Vagina (tissue), 2 donors: ENCODE measurements at regions of chr2 and their contacts with region 1.

Region 1: DNA sequence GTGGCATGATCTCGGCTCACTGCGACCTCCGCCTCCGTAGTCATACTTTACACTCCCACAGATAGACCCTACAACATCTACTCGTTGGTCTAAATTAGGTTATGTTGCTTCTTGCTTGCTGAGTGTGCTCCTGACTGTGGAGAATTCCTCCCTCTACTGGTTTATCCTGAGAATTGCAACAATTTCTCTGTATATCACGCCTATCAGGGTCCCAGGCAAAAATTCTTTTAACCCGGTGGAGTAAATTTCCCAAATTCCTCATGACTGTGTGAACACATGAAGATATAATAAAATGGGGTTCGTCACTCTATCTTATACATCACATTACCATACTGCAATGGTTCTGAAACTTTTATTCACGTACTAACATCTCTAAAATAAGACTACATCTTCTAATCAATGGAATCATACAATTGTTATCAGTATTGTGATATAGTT is 156.7 kb downstream of the EVA1A start:
- DNase-seq: no peak
- H3K4me3 ChIP-seq: no peak overlapping the region
- H3K27ac ChIP-seq: no peak overlapping the region
- H3K4me1 ChIP-seq: no peaks in the 10 kb centered on the region
- H3K27me3 ChIP-seq: no peaks in the 10 kb centered on the region
- CTCF ChIP-seq: peak; percentile 40 to 64 (median 58)
- POLR2A ChIP-seq: no peak

Region 2: DNA sequence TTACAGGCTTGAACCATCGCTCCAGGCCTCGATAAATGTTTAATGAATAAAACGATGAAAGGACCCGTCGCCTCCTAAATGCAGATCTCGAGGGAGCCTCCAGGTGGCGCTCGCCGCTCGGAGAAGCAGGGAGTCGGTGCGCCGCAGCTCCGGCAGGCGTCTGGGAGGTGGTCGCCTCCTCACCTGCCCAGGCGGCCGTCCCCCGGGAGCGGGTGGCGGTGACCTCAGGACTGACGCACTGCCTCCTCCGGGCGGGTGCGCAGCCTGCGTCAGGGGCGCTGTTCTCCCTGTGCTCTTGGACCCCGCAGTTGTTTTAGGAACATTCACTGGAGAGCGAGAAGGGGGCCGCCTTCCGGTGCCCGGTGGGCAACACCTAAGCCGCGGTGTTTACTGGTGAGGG is 484.2 kb before region 1 on chr2:
- intact Hi-C with region 1: loop called (anchors 10 kb)
- DNase-seq: no peak
- H3K4me3 ChIP-seq: peak overlapping the region in 1 of 2 donors; percentile 21
- H3K27ac ChIP-seq: no peak overlapping the region
- H3K4me1 ChIP-seq: peaks cover 6% of the 10 kb centered on the region
- H3K27me3 ChIP-seq: no peaks in the 10 kb centered on the region
- CTCF ChIP-seq: peak; percentile 63 to 73 (median 71)
- POLR2A ChIP-seq: no peak

Region 3: GRCh38 chr2:75676464-75676863 is 272.5 kb after region 1 on chr2:
- intact Hi-C with region 1: no loop called
- DNase-seq: no peak
- H3K4me3 ChIP-seq: no peak overlapping the region
- H3K27ac ChIP-seq: no peak overlapping the region
- H3K4me1 ChIP-seq: no peaks in the 10 kb centered on the region
- H3K27me3 ChIP-seq: no peaks in the 10 kb centered on the region
- CTCF ChIP-seq: no peak
- POLR2A ChIP-seq: no peak